ENCODE measurements at regions of chr13 and their contacts with region 1.

Region 1: DNA sequence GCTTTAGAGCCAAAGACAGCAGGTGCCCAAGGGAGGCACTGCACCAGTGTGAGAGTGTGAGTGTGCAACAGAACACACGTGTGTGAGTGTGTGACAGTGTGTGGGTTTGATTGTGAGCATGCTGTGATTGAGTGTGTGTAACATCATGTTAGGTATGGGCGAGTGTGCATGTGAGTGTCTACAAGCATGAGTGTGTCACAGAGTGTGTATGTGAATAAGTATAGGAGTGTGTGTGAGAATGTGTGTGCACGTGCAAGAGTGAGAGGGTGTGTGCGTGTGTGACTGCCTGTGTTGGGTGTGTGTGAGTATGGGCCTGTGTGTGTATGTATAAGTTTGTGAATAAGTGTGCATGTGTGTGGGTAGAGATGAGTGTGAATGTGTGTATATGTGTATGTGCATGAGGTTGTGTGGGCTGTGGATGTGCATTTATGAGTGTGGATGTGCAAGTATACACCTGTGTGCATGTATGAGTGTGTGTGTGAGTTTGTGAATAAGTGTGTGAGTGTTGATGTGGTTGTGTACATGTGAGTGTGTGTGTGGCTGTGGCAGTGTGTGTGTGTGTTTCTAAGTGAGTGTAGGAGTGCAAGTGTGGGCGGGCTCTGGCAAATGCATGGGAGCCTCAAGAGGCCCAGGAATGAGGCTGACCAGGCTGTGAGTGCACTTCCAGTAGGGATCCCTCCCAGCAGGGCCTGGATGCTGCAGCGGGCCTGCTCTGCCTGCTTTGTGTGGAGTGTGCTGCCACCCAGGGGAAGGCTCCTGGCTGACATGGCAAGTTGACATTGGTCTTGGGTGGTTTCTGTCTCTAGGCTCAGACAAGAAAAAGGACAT is 198.4 kb downstream of the COL4A1 start:
- DNase-seq: no peak
- H3K4me3 ChIP-seq: no peak overlapping the region
- H3K27ac ChIP-seq: no peak overlapping the region
- H3K4me1 ChIP-seq: peaks cover 21% of the 10 kb centered on the region
- H3K27me3 ChIP-seq: no peaks in the 10 kb centered on the region
- CTCF ChIP-seq: peak; percentile 85 to 99 (median 88)

Region 2: GRCh38 chr13:109790951-109791605 is 317.5 kb before region 1 on chr13:
- dilution Hi-C with region 1: loop called (anchors 10 kb)
- DNase-seq: no peak
- H3K4me3 ChIP-seq: no peak overlapping the region
- H3K27ac ChIP-seq: no peak overlapping the region
- H3K4me1 ChIP-seq: peaks cover 4% of the 10 kb centered on the region
- H3K27me3 ChIP-seq: peaks cover 6% of the 10 kb centered on the region
- CTCF ChIP-seq: peak; percentile 35 to 67 (median 41)

Region 3: GRCh38 chr13:110047496-110047895 is 61.1 kb before region 1 on chr13:
- dilution Hi-C with region 1: no loop called
- DNase-seq: no peak
- H3K4me3 ChIP-seq: no peak overlapping the region
- H3K27ac ChIP-seq: no peak overlapping the region
- H3K4me1 ChIP-seq: no peaks in the 10 kb centered on the region
- H3K27me3 ChIP-seq: no peaks in the 10 kb centered on the region
- CTCF ChIP-seq: no peak

Region 4: DNA sequence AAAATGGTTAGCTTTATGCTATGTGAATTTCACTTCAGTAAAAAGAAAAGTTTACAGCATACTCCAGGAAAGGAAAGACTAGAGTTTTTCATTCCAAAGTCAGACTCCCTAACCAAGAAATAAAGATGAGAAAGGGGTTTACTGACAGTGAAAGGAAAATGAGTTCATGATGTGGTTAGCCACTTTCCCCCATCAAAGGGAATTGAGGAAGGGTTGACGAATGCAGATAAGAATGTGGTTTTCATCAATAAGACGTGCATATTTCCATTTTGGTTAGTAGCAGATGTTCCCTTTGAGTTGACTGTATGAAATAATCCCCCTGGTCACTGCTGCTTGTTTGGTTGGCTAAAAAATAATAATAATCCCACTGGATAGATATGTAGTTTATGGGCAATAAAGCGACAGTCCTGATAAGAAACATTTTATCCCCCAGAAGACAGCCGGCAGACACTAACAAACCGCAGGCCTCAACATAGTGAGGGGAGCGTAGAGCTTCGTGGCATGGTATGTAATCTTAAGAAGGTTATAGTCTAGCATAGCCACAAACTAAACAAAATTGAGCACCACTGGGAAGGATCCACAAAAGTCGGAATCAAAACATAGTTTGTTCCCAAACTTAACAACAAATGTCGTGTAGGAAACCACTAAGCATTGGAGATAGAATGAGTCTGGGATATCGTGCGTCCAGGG is 313.3 kb after region 1 on chr13:
- dilution Hi-C with region 1: no loop called
- DNase-seq: no peak
- H3K4me3 ChIP-seq: no peak overlapping the region
- H3K27ac ChIP-seq: no peak overlapping the region
- H3K4me1 ChIP-seq: peaks cover 9% of the 10 kb centered on the region
- H3K27me3 ChIP-seq: no peaks in the 10 kb centered on the region
- CTCF ChIP-seq: no peak